Endothelial cell of umbilical vein (primary cell): ENCODE measurements at regions of chr12 and their contacts with region 1.

Region 1: GRCh38 chr12:50504798-50505385 is at the start of gene DIP2B:
- DNase-seq: peak; percentile 90
- H3K4me3 ChIP-seq: peak within 1 kb of the TSS; percentile 84 to 97 (median 94)
- H3K27ac ChIP-seq: peak within 1 kb of the TSS; percentile 65
- H3K4me1 ChIP-seq: peaks cover 11% of the 10 kb centered on the region
- H3K27me3 ChIP-seq: no peaks in the 10 kb centered on the region
- CTCF ChIP-seq: peak; percentile 75 to 90
- POLR2A ChIP-seq: peak; percentile 59
- total RNA-seq, gene DIP2B: 27.7 and 28.0 TPM in 2 replicates

Region 2: DNA sequence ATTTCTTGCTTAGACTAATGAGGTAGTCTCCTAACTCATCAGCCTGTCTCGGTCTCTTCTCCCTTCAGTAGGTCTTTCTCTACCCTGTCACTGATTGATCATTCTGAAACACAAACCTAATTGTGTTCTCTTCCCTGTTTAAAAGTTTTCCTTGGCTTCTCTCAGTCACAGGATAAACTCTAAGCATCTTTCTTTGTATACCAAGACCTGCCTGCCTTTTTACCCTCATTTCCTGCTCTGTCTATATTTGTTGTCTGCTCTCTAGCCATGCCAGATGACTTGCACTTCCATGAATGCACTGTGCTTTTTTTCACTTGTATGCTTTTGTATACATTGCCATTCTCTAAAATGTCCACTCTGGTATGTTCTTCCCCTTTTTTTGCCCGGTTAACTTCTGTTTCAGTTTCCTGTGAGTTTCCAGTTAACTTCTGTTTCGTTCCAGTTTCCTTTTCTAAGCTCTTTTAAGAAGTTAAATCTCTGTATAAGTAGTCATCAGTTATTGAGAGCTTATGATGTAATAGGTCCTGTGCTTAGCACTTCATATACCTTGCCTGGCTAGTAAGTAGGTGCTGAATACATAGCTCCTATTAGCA is 12.7 kb after region 1 on chr12:
- CTCF ChIA-PET with region 1: interaction called, 4 read pairs
- POLR2A ChIA-PET with region 1: no interaction called
- dilution Hi-C with region 1: no loop called
- intact Hi-C with region 1: loop called (anchors 1 kb)
- DNase-seq: peak; percentile 74
- H3K4me3 ChIP-seq: peak overlapping the region in 1 of 3 experiments; percentile 49
- H3K27ac ChIP-seq: peak overlapping the region; percentile 92
- H3K4me1 ChIP-seq: peaks cover 12% of the 10 kb centered on the region
- H3K27me3 ChIP-seq: no peaks in the 10 kb centered on the region
- CTCF ChIP-seq: no peak
- POLR2A ChIP-seq: no peak

Region 3: GRCh38 chr12:50734409-50735263 is 229.7 kb after region 1 on chr12:
- CTCF ChIA-PET with region 1: interaction called, 17 read pairs
- POLR2A ChIA-PET with region 1: no interaction called
- dilution Hi-C with region 1: no loop called
- intact Hi-C with region 1: loop called (anchors 1 kb)
- DNase-seq: peak; percentile 39
- H3K4me3 ChIP-seq: no peak overlapping the region
- H3K27ac ChIP-seq: no peak overlapping the region
- H3K4me1 ChIP-seq: no peaks in the 10 kb centered on the region
- H3K27me3 ChIP-seq: no peaks in the 10 kb centered on the region
- CTCF ChIP-seq: peak; percentile 66 to 71
- POLR2A ChIP-seq: no peak